ENCODE measurements at regions of chr6 and their contacts with region 1.

Region 1: DNA sequence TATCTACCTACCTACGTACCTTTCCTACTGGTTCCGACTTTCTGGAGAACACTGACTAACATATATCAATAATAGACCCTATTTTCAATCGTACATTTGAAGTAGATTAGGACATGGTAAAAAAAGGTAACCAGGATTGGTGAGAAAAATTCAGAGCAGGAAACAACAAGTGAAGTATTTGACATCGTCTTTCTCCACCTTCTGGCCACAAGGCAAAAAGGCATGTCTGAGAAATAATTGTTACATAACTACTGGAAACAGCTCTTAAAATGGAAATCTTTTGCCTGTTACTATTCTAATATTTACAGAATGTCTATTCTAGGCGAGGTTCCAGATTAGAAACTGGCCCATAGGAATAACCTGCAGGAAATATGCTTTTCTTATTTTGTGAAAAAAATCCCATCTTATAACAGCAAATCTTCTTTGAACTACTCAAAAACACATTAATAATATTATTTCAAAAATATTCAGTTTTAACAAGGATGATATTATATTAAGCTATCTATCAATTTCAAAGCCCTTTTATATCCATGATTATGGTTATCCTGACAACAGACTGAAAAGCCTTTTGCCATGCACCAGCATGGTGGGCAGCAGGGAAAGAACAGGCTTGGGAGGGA is 80.8 kb downstream of the RCAN2 start:
- DNase-seq: peak; percentile 62
- ATAC-seq: no peak
- H3K4me3 ChIP-seq: no peak overlapping the region
- H3K27ac ChIP-seq: no peak overlapping the region
- H3K4me1 ChIP-seq: no peaks in the 10 kb centered on the region
- H3K27me3 ChIP-seq: peaks cover 22% of the 10 kb centered on the region
- CTCF ChIP-seq: peak; percentile 93

Region 2: GRCh38 chr6:45930420-45931040 is 479.9 kb before region 1 on chr6:
- CTCF ChIA-PET with region 1: no interaction called
- POLR2A ChIA-PET with region 1: no interaction called
- intact Hi-C with region 1: loop called (anchors 1 kb)
- DNase-seq: peak; percentile 82
- ATAC-seq: peak; percentile 86
- H3K4me3 ChIP-seq: no peak overlapping the region
- H3K27ac ChIP-seq: no peak overlapping the region
- H3K4me1 ChIP-seq: no peaks in the 10 kb centered on the region
- H3K27me3 ChIP-seq: peaks cover 22% of the 10 kb centered on the region
- CTCF ChIP-seq: peak; percentile 98

Region 3: GRCh38 chr6:46221222-46221793 is 189.1 kb before region 1 on chr6:
- CTCF ChIA-PET with region 1: interaction called, 7 read pairs
- POLR2A ChIA-PET with region 1: no interaction called
- intact Hi-C with region 1: loop called (anchors 1 kb)
- DNase-seq: peak; percentile 70
- ATAC-seq: peak; percentile 69
- H3K4me3 ChIP-seq: no peak overlapping the region
- H3K27ac ChIP-seq: no peak overlapping the region
- H3K4me1 ChIP-seq: no peaks in the 10 kb centered on the region
- H3K27me3 ChIP-seq: peaks cover 50% of the 10 kb centered on the region
- CTCF ChIP-seq: peak; percentile 87

Region 4: GRCh38 chr6:46444772-46445454 is 34.5 kb after region 1 on chr6:
- CTCF ChIA-PET with region 1: no interaction called
- POLR2A ChIA-PET with region 1: no interaction called
- intact Hi-C with region 1: no loop called
- DNase-seq: no peak
- ATAC-seq: no peak
- H3K4me3 ChIP-seq: no peak overlapping the region
- H3K27ac ChIP-seq: no peak overlapping the region
- H3K4me1 ChIP-seq: no peaks in the 10 kb centered on the region
- H3K27me3 ChIP-seq: peaks cover 4% of the 10 kb centered on the region; the same call in 1 of the 2 replicates
- CTCF ChIP-seq: no peak

Region 5: GRCh38 chr6:46510651-46511050 is 100.2 kb after region 1 on chr6:
- CTCF ChIA-PET with region 1: no interaction called
- POLR2A ChIA-PET with region 1: no interaction called
- intact Hi-C with region 1: no loop called
- DNase-seq: peak; percentile 23
- ATAC-seq: no peak
- H3K4me3 ChIP-seq: no peak overlapping the region
- H3K27ac ChIP-seq: no peak overlapping the region
- H3K4me1 ChIP-seq: no peaks in the 10 kb centered on the region
- H3K27me3 ChIP-seq: peaks cover 34% of the 10 kb centered on the region
- CTCF ChIP-seq: no peak